ENCODE measurements at regions of chr19 and their contacts with region 1.

Region 1: DNA sequence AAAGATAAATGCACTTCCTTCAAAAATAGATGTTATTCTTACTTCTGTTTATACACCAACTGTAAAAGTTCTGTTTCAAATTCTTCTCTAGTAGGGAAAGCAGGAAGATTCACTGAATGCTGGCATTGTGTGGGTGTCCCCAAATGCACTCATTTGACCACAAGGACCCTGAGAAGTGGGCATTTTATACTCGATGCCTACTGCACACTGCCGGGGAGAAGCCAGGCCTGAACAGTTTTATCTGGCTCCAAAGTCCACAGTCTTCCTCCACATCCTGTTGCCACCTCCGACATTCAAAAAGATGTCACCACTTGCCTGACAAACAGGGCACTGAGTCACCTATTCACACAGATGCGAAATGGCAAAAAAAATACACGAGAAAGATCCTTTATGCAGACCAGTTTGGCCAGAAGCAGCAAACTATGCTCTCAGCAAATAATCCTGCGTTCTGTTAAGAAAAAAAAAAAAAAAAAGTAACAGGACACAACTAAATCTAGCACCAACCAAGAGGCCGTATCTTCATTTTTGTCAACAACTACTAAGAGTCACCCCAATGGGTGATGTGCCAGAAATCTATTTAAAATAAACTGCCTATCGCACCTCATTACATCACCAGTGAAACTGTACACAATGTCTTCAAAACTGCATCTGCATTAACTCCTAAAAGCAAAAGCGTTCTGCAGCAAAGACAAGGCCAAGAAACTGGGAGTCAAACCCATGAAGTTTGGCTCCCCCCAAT is 6.2 kb downstream of the ZC3H4 start:
- DNase-seq: peak; percentile 69
- H3K4me3 Mint-ChIP-seq: peak overlapping the region; percentile 71
- H3K27ac Mint-ChIP-seq: peak overlapping the region; percentile 97
- H3K4me1 Mint-ChIP-seq: peaks cover 59% of the 10 kb centered on the region
- H3K27me3 Mint-ChIP-seq: no peaks in the 10 kb centered on the region

Region 2: DNA sequence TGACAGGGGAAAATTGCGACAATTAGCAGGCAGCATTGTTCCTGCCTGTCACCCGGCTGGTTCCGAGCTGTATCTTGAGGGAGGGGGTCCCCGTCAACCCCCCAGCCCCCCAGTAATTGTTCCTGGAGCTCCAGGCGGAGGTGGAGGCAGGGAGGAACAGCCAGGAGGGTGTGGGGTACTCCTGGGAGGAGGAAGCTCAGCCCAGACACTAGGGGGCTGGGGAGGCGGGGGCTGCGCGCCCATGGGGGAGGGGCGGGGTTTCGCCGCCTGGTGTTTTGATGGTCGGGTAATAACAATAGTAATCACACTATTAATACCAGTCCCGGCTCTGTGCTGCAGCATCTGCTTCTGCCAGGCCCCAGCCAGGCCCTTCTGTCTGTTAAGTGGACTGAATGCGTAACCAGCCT is 79.2 kb before region 1 on chr19:
- CTCF ChIA-PET with region 1: no interaction called
- POLR2A ChIA-PET with region 1: no interaction called
- intact Hi-C with region 1: no loop called
- DNase-seq: no peak
- H3K4me3 Mint-ChIP-seq: no peak overlapping the region
- H3K27ac Mint-ChIP-seq: no peak overlapping the region
- H3K4me1 Mint-ChIP-seq: peaks cover 4% of the 10 kb centered on the region
- H3K27me3 Mint-ChIP-seq: peaks cover 38% of the 10 kb centered on the region

Region 3: GRCh38 chr19:47094557-47095475 is 12.6 kb before region 1 on chr19:
- CTCF ChIA-PET with region 1: interaction called, 11 read pairs
- POLR2A ChIA-PET with region 1: interaction called, 205 read pairs
- intact Hi-C with region 1: loop called (anchors 1 kb)
- DNase-seq: peak; percentile 83
- H3K4me3 Mint-ChIP-seq: peak overlapping the region; percentile 77
- H3K27ac Mint-ChIP-seq: peak overlapping the region; percentile 98
- H3K4me1 Mint-ChIP-seq: peaks cover 66% of the 10 kb centered on the region
- H3K27me3 Mint-ChIP-seq: no peaks in the 10 kb centered on the region

Region 4: DNA sequence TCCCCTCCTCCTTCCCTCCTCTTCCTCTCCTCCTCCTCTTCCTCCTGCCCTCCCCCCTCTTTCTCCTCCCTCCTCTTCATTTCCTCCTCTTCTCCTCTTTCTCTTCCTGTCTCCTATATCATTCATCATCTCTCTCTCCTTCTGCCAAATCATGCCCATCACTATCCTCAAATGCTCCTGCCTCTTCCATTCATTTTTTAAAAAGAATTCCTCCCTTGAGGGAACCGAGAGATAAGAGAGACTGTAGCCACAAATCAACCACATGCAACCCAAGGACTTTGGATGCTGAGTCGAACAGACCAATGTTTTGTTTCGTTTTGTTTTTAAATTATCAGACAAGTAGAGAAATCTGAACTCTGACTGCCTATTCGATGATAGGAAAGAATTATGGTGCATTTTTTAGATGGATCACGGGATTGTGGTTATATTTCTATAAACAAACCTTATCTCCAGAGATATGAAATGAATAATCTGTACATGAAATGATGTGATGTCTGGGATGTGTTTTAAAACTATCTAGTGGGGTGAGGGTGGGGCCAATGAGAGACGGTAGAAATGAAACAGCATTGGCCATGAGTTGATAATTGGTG is 475.0 kb after region 1 on chr19:
- CTCF ChIA-PET with region 1: no interaction called
- POLR2A ChIA-PET with region 1: no interaction called
- intact Hi-C with region 1: no loop called
- DNase-seq: no peak
- H3K4me3 Mint-ChIP-seq: peak overlapping the region; percentile 18
- H3K27ac Mint-ChIP-seq: peak overlapping the region; percentile 53
- H3K4me1 Mint-ChIP-seq: peaks cover 30% of the 10 kb centered on the region
- H3K27me3 Mint-ChIP-seq: no peaks in the 10 kb centered on the region